Posterior cingulate gyrus (tissue), 11 donors: ENCODE measurements at regions of chr5 and their contacts with region 1.

Region 1: GRCh38 chr5:7745882-7746610 is 104.9 kb downstream of the CFAP90 start:
- DNase-seq: peak; percentile 50 to 93 (median 78)

Region 2: DNA sequence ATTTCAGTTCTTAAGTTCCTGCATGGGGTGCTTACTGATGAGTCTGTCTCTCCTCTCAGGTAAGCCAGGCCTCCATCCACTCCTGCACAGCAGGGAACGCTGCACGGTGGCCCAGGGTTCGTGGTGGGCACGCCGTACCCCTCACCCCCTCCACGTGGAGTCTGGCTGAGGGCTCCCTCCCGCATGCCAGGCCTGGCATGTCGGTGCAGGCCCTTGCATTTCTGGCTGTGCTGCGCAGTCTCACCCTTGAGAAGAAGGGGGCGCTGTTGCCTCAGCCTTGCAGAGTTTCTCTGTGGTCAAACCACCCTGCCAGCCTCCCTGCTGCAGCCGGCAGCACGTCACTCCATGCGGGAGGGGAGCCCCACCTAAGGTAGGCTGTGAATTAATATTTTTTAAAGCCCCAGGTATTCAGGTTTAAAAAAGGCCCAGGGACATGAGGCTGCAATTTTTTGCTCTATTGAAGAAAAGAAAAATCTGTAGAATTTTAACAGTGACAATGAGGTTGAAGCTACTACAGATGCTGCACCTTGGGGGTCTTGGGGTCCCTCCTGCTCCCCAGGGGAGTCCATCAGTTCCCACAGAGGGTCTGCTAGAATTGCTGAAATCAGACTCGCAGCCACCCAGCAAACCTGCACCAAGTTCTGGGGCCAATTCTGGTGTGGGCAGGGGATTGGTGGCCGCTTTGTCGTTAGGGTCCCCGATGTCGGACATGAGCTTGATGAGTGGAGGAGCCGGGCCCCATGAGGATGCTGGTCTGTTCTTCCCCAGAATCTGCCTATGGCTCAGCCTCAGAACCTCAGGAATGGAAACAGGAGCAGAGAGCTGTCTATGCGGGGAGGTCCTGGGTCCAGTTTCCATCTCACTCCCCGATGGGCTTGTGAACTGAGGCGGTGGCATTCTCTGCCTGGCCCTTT is 980.2 kb before region 1 on chr5:
- intact Hi-C with region 1: loop called (anchors 5 kb)
- DNase-seq: peak; percentile 70 to 97 (median 86)

Region 3: DNA sequence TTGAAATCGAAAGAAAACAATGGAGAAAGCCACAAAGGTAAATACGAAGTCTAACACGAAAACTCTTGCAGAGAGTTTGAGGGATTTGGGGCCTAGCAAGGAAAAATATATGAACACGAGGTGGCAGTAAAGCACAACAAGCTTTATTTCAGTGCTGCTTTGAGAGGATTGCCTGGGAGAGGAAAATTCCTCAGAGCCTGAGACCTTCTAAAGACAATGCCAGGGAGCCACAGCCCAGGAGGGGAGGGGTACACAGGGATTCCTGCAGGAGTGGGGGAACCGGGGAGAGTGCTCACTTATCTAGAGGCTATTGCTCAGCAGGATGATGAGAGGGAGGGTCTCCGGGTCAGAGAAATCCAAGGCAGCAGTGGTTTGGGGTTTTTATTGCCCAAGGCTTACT is 485.0 kb before region 1 on chr5:
- intact Hi-C with region 1: loop called (anchors 5 kb)
- DNase-seq: no peak

Region 4: DNA sequence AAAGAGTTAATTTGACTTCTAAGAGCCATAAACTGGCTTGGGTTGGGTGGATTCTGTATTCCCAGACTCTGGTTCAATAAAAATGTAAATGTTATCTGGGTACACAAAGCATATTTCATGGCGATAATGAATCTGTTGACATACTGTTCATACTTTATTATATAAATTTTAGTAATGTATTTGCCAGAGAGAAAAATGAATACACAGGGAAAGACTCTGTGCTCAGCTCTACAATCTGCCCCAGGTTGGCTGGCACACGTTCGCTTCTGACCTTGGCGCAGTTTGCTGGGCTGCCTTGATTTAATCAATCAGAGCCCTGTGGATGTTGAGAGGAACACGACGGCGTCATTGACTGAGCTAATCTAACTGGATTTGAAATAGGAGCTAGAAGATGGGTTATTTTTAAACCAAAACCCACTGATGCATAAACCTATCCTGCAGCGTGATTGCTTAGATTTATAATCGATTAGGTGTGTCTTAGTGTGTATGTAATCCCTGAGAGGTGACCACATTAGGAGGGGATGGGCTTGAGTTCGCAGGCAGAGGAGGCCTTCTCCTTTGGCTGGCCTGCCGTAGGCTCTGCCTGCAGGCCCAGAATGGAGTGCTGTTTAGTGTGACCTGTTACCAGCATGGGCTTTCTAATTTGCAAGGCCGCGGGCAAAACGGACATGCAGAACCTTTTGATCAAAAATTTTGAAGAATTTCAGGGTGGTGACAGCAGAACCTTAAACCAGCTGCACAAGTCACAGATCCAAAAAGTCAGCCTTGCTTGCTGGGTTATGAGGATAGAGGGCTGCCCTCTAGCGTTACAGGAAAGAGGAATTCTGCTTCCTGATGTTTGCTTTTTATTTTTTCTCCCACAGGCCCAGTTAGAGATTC is 354.0 kb before region 1 on chr5:
- intact Hi-C with region 1: loop called (anchors 5 kb)
- DNase-seq: peak in 2 of 10 donors; percentile 31 to 35

Region 5: GRCh38 chr5:7878381-7878873 is 132.4 kb after region 1 on chr5:
- intact Hi-C with region 1: no loop called
- DNase-seq: no peak